WTC11 (cell line): ENCODE measurements at regions of chr22 and their contacts with region 1.

Region 1: DNA sequence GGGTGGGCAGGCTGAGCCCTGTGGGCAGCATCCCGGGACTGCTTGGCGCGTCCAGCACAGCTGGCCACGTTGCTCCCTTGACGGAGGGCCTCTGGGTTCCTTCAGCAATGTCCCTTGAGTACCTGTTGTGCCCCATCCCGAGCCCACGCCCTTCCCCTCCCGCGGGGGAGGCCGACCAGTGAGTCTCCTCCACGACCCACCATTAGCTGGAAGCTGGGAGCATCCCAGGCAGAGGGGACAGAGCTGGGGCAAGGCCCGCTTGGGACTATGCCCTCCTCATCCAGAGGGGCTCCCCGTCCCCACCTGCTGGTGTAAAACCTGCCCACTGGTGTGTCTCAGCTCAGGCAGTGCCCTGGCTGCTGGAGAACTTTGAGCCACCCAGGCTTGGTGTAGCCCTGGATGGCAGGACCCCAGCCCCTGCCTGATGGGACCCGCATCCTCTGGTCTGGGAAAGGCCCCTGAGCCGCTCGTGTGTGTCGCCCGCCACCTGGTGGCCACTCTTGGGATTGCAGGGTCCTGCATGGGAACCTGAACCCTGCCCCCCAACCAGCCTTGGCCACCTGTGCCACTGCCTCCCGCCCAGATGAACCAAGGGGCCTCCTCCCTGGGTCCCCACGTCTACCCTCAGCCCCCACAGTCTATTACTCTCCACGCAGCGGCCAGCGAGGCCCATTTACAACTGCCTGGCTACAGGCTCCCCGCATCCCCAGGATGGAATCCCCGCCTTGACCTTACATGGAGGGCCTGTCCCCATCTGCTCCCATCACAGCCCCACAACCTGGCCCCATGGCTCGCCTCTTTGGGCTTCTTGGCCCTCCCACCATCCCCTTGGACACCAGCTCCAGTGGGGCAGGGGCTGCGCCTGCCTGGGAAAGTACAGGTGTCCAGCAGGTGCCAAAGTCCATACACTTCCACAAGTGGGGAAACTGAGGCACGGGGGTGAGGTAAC is 16.6 kb upstream of the ARHGAP8 start:
- DNase-seq: peak; percentile 96
- ATAC-seq: peak; percentile 72
- H3K4me3 Mint-ChIP-seq: no peak overlapping the region
- H3K27ac Mint-ChIP-seq: no peak overlapping the region
- H3K4me1 Mint-ChIP-seq: peaks cover 16% of the 10 kb centered on the region
- H3K27me3 Mint-ChIP-seq: no peaks in the 10 kb centered on the region
- CTCF ChIP-seq: peak; percentile 99

Region 2: GRCh38 chr22:44701824-44702478 is 33.9 kb before region 1 on chr22 and contains the start of gene PRR5:
- CTCF ChIA-PET with region 1: interaction called, 18 read pairs
- POLR2A ChIA-PET with region 1: no interaction called
- DNase-seq: peak; percentile 64
- ATAC-seq: peak; percentile 64
- H3K4me3 Mint-ChIP-seq: peak within 1 kb of the TSS; percentile 70
- H3K27ac Mint-ChIP-seq: no peak within 1 kb of the TSS
- H3K4me1 Mint-ChIP-seq: peaks cover 20% of the 10 kb centered on the region
- H3K27me3 Mint-ChIP-seq: peaks cover 35% of the 10 kb centered on the region
- CTCF ChIP-seq: no peak
- total RNA-seq, gene PRR5: 12.3 to 15.6 TPM (median 13.6 TPM) in 3 replicates

Region 3: GRCh38 chr22:44862981-44863736 is 127.3 kb after region 1 on chr22:
- CTCF ChIA-PET with region 1: no interaction called
- POLR2A ChIA-PET with region 1: no interaction called
- DNase-seq: peak; percentile 32
- ATAC-seq: peak; percentile 76
- H3K4me3 Mint-ChIP-seq: no peak overlapping the region
- H3K27ac Mint-ChIP-seq: no peak overlapping the region
- H3K4me1 Mint-ChIP-seq: 0 out of 2 replicates have a peak, but pooled peaks cover 3% of the 10 kb centered on the region
- H3K27me3 Mint-ChIP-seq: no peaks in the 10 kb centered on the region
- CTCF ChIP-seq: no peak